ENCODE measurements at regions of chr16 and their contacts with region 1.

Region 1: DNA sequence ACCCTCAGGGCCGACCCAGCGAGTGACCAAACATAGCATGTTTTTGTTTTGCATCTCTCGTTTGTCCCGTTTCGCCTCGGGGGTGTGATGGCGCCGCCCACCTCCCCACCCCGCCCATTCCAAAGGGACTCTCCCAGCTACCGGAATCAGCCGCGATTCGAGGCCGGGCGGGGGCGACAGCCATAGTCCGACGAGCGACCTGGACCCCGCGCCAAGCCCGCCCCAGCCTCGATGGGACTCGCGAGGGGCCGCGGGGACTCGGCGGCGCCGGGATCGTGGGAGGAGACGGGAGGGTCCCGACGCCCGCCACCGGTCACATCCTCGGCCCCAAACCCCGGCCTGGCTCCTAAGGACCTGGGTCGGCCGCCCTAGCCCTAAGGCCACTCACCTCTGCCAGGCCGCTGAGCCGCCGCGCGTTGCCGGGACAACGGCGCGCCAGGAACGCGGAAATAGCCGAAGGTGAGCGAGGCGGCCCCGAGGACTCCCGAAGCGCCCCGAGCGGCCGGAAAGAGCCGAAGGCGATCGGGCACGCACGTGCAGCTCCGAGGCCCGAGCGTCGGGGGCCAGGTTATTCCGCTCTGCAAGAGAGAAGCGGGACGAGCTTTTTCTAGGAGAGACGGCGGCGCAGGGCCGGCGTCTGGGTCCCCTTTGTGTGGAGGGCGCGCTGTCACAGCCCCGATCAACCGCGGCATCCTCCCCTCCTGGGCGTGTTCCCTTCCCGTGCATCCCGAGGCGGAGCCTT is 1.4 kb downstream of the IFT140 start:
- DNase-seq: peak; percentile 98
- H3K4me3 Mint-ChIP-seq: peak overlapping the region; percentile 95
- H3K27ac Mint-ChIP-seq: peak overlapping the region; percentile 100
- H3K4me1 Mint-ChIP-seq: peaks cover 25% of the 10 kb centered on the region
- H3K27me3 Mint-ChIP-seq: no peaks in the 10 kb centered on the region

Region 2: DNA sequence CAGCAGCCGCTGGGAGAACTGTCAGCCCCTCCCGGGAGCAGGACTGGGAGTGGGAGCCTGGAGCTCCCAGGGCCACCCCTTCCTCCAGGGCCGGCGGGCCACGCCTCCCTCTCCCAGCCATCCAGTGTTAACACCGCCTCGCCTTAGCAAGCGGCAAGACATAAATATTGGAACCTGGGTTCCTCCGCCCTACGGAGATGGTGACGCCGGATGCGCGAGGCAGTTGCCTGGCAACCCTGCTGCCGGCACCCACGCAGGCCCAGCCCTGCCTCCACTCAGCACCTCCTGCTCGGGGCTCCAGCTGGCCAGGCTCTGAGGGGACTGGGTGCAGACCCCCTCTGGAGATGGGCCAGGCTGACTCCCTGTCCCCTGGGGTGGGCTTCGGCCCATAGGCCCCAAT is 485.0 kb before region 1 on chr16:
- intact Hi-C with region 1: no loop called
- DNase-seq: peak; percentile 72
- H3K4me3 Mint-ChIP-seq: no peak overlapping the region
- H3K27ac Mint-ChIP-seq: no peak overlapping the region
- H3K4me1 Mint-ChIP-seq: no peaks in the 10 kb centered on the region
- H3K27me3 Mint-ChIP-seq: no peaks in the 10 kb centered on the region

Region 3: GRCh38 chr16:1420111-1420540 is 190.3 kb before region 1 on chr16:
- intact Hi-C with region 1: loop called (anchors 2 kb)
- DNase-seq: no peak
- H3K4me3 Mint-ChIP-seq: peak overlapping the region; percentile 81
- H3K27ac Mint-ChIP-seq: peak overlapping the region; percentile 97
- H3K4me1 Mint-ChIP-seq: peaks cover 18% of the 10 kb centered on the region
- H3K27me3 Mint-ChIP-seq: peaks cover 3% of the 10 kb centered on the region

Region 4: DNA sequence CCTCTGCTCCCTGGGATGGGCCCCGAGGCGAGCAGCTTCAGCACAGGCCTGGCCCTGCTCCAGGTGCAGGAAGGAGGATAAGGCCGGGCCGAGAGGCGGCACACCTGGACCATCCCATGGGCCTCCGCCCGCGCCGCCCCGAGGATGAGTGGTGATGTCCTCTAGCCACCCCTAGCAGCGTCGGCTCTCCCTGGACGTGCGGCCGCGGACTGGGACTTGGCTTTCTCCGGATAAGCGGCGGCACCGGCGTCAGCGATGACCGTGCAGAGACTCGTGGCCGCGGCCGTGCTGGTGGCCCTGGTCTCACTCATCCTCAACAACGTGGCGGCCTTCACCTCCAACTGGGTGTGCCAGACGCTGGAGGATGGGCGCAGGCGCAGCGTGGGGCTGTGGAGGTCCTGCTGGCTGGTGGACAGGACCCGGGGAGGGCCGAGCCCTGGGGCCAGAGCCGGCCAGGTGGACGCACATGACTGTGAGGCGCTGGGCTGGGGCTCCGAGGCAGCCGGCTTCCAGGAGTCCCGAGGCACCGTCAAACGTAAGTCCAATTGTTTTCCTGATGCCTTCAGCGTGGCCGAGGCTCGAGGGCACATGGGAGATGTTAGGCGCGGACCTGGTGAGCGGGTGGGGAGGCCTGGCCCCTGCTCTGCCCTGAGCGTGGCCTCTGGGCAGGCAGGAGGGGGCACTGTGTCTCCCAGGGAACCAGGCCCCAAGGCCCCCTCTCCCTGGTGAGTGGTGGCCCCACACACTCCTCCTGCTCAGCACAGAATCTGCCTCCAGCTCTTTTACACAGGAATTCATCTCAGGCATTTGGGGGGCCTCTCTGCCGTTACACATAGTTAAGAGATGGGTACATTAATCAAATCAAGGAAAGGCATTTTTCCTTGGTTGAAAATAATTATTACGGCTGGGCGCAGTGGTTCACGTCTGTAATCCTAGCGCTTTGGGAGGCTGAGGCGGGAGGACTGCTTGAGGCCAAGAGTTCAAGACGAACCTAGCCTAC is 76.1 kb before region 1 on chr16:
- intact Hi-C with region 1: loop called (anchors 2 kb)
- DNase-seq: peak; percentile 70
- H3K4me3 Mint-ChIP-seq: peak overlapping the region; percentile 100
- H3K27ac Mint-ChIP-seq: peak overlapping the region; percentile 94
- H3K4me1 Mint-ChIP-seq: peaks cover 37% of the 10 kb centered on the region
- H3K27me3 Mint-ChIP-seq: no peaks in the 10 kb centered on the region

Region 5: GRCh38 chr16:1677802-1678496 is 67.5 kb after region 1 on chr16 and contains the start of gene JPT2:
- intact Hi-C with region 1: loop called (anchors 1 kb)
- DNase-seq: peak; percentile 99
- H3K4me3 Mint-ChIP-seq: peak within 1 kb of the TSS; percentile 95
- H3K27ac Mint-ChIP-seq: peak within 1 kb of the TSS; percentile 93
- H3K4me1 Mint-ChIP-seq: peaks cover 34% of the 10 kb centered on the region
- H3K27me3 Mint-ChIP-seq: no peaks in the 10 kb centered on the region
- total RNA-seq, gene JPT2: 119 and 120 TPM in 2 replicates

Region 6: GRCh38 chr16:1772736-1773584 is 162.5 kb after region 1 on chr16 and contains the starts of genes EME2 and MRPS34:
- intact Hi-C with region 1: loop called (anchors 2 kb)
- DNase-seq: peak; percentile 96
- H3K4me3 Mint-ChIP-seq: peak within 1 kb of the TSS; percentile 93
- H3K27ac Mint-ChIP-seq: peak within 1 kb of the TSS; percentile 95
- H3K4me1 Mint-ChIP-seq: peaks cover 10% of the 10 kb centered on the region
- H3K27me3 Mint-ChIP-seq: no peaks in the 10 kb centered on the region
- total RNA-seq, gene EME2: 28.2 and 30.0 TPM in 2 replicates
- total RNA-seq, gene MRPS34: 201 and 207 TPM in 2 replicates

Measured in activated CD4-positive, alpha-beta T cell treated with anti-CD3 and anti-CD28 coated beads, Interleukin-2, amount 10 ng/mL, durations not matched to agents 24 days and 14 days (primary cell).